Activated CD4-positive, alpha-beta T cell treated with anti-CD3 and anti-CD28 coated beads, Interleukin-2, amount 10 ng/mL, durations not matched to agents 24 days and 14 days (primary cell): ENCODE measurements at regions of chr3 and their contacts with region 1.

Region 1: GRCh38 chr3:46280105-46280797 is 38.0 kb downstream of the CCR3 start:
- DNase-seq: peak; percentile 88
- H3K4me3 Mint-ChIP-seq: peak overlapping the region; percentile 34
- H3K27ac Mint-ChIP-seq: peak overlapping the region; percentile 72
- H3K4me1 Mint-ChIP-seq: peaks cover 74% of the 10 kb centered on the region
- H3K27me3 Mint-ChIP-seq: peaks cover 5% of the 10 kb centered on the region

Region 2: GRCh38 chr3:46208167-46208704 is 72.0 kb before region 1 on chr3 and contains the start of gene CCR1:
- intact Hi-C with region 1: loop called (anchors 2 kb)
- DNase-seq: peak; percentile 89
- H3K4me3 Mint-ChIP-seq: peak within 1 kb of the TSS; percentile 73
- H3K27ac Mint-ChIP-seq: peak within 1 kb of the TSS; percentile 74
- H3K4me1 Mint-ChIP-seq: peaks cover 56% of the 10 kb centered on the region
- H3K27me3 Mint-ChIP-seq: peaks cover 2% of the 10 kb centered on the region
- total RNA-seq, gene CCR1: 5.9 and 6.7 TPM in 2 replicates

Region 3: GRCh38 chr3:46349485-46350261 is 69.4 kb after region 1 on chr3:
- intact Hi-C with region 1: loop called (anchors 2 kb)
- DNase-seq: peak; percentile 77
- H3K4me3 Mint-ChIP-seq: peak overlapping the region; percentile 68
- H3K27ac Mint-ChIP-seq: peak overlapping the region; percentile 82
- H3K4me1 Mint-ChIP-seq: peaks cover 64% of the 10 kb centered on the region
- H3K27me3 Mint-ChIP-seq: peaks cover 25% of the 10 kb centered on the region